Activated B cell treated with CpG ODN at 0.5 μM for 24 hours (primary cell): ENCODE measurements at regions of chr9 and their contacts with region 1.

Region 1: GRCh38 chr9:31669311-31669710 is 715.1 kb upstream of the ACO1 start:
- DNase-seq: no peak
- ATAC-seq: no peak
- H3K4me3 Mint-ChIP-seq: no peak overlapping the region
- H3K27ac Mint-ChIP-seq: no peak overlapping the region
- H3K4me1 Mint-ChIP-seq: no peaks in the 10 kb centered on the region
- H3K27me3 Mint-ChIP-seq: no peaks in the 10 kb centered on the region
- CTCF ChIP-seq: no peak

Region 2: GRCh38 chr9:31045789-31046188 is 623.5 kb before region 1 on chr9:
- CTCF ChIA-PET with region 1: no interaction called
- POLR2A ChIA-PET with region 1: no interaction called
- intact Hi-C with region 1: no loop called
- DNase-seq: no peak
- ATAC-seq: no peak
- H3K4me3 Mint-ChIP-seq: no peak overlapping the region
- H3K27ac Mint-ChIP-seq: no peak overlapping the region
- H3K4me1 Mint-ChIP-seq: no peaks in the 10 kb centered on the region
- H3K27me3 Mint-ChIP-seq: no peaks in the 10 kb centered on the region
- CTCF ChIP-seq: no peak

Region 3: GRCh38 chr9:31715250-31715649 is 45.9 kb after region 1 on chr9:
- CTCF ChIA-PET with region 1: no interaction called
- POLR2A ChIA-PET with region 1: no interaction called
- intact Hi-C with region 1: loop called (anchors 5 kb)
- DNase-seq: no peak
- ATAC-seq: no peak
- H3K4me3 Mint-ChIP-seq: no peak overlapping the region
- H3K27ac Mint-ChIP-seq: no peak overlapping the region
- H3K4me1 Mint-ChIP-seq: no peaks in the 10 kb centered on the region
- H3K27me3 Mint-ChIP-seq: no peaks in the 10 kb centered on the region
- CTCF ChIP-seq: no peak

Region 4: DNA sequence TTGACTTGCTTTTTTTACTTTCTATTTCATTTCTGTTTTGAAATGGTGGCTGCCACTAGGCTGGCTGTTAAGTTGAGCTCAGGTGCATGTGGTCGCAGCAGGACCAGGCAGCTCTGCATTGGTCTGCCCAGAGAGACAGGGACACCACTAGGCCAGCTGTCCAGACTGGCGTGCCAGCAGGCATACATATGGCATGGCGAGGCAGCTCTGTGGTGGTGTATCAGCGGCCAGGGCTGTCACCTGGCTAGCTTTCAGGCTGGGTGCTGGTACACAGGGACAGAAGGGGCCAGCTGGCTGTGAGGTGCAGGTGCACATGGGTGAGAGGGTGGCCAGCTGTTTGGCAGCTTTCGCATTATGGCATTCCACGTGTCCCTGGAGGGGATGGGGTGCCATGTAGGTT is 61.1 kb after region 1 on chr9:
- CTCF ChIA-PET with region 1: no interaction called
- POLR2A ChIA-PET with region 1: no interaction called
- intact Hi-C with region 1: no loop called
- DNase-seq: no peak
- ATAC-seq: no peak
- H3K4me3 Mint-ChIP-seq: no peak overlapping the region
- H3K27ac Mint-ChIP-seq: no peak overlapping the region
- H3K4me1 Mint-ChIP-seq: no peaks in the 10 kb centered on the region
- H3K27me3 Mint-ChIP-seq: no peaks in the 10 kb centered on the region
- CTCF ChIP-seq: no peak